ENCODE measurements at regions of chrX and their contacts with region 1.

Region 1: GRCh38 chrX:39814391-39814790 is 283.4 kb downstream of the BCOR start:
- DNase-seq: no peak

Region 2: DNA sequence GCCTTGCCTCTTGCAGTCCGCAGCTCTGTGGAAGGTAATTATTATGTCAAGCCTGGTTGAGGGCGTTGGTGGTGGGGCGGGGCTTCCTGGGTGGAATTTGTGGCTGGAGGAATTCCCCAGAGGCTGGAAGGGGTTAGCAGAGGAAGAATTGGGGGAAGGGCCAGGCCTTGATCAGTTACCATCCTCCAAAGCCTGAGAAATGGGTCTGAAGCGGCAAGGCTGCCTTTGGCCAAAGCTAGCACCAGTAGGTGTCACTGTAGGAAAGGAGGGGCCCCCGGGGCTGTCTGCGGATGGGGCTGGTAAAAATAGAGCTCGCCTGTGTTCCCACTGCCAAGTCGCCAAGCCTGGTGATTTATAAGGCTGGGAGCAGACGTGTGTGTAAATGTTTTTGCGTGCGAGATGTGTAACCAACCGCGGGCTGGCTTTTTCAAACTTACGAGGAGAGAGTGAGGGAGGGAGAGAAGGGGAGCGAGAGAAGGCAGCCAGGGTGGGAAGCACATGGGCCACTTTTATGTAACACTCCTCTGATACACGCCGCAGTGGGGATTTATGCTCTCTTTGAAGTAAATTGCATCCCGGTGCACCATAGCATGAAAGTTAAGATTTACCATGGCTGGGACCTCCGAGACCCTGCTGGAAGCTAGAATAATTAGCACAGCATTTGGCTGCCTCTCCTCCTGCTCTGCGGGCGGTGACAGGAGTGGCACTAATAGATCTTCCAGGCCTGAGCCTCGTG is 83.6 kb before region 1 on chrX:
- intact Hi-C with region 1: loop called (anchors 5 kb)
- DNase-seq: peak; percentile 81

Region 3: GRCh38 chrX:39907964-39908616 is 93.7 kb after region 1 on chrX:
- intact Hi-C with region 1: loop called (anchors 5 kb)
- DNase-seq: peak; percentile 81

Region 4: GRCh38 chrX:40097497-40098263 is 283.3 kb after region 1 on chrX and contains the start of gene BCOR:
- intact Hi-C with region 1: loop called (anchors 5 kb)
- DNase-seq: peak; percentile 84
- total RNA-seq, gene BCOR: 24.2 TPM

Region 5: GRCh38 chrX:40169193-40170101 is 355.1 kb after region 1 on chrX:
- intact Hi-C with region 1: loop called (anchors 5 kb)
- DNase-seq: peak; percentile 81

Region 6: DNA sequence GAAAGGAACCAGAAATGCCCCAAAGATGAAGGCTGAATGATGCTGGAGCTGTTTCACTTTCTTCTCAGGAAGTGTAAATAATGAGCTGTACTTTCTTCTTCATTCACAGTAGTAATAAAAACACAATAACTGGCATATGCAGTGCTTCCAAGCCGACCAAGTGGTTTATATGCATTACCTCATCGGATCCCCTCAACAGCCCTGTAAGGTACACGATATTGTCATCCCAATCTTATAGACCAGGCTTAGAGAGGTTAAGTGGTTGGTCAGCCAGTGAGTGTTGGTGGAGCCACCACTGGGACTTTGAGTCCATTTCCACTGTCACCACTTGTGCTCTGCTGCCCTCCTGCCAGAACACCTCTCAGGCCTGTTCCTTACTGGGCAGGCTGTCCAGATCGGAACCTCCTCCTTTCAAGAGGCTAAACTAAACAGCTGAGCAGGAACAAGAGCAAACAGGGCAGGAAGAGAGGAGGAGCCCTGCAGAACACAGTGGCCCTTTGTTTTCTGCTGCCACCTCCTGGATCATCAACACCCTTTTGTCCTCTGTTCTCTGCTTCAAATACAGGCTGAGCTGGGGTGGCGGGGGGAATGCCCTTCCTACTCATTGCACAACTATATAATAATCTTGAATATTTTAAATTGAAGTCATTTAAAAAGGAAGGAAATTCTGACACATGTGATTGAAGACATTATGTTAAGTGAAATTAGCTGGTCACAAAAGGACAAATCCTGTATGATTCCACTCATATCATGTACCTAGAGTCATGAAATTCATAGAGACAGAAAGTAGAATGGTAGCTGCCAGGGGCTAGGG is 653.8 kb after region 1 on chrX:
- intact Hi-C with region 1: loop called (anchors 10 kb)
- DNase-seq: no peak

Measured in cardiac septum (tissue), 1 donor.